ENCODE measurements at regions of chr2 and their contacts with region 1.

Region 1: DNA sequence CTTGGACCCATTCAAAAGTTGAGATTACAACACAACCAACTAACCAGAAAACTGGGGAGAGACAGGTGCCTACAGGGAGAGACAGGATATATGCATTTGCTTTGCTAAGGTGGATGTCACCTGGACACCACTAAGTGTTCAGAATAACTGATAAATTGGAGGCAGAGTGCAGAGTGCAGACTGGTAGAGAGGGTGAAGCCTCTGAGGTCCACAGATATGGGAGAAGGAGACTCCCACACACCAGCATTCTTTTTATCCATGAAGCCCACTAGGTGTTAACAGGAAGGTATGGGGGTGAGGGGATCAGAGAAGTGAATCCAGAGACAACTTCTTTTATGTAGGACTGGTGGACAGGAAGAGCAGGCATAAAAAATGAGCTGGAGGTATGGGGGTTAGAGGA is 1310.0 kb upstream of the ZEB2 start:
- DNase-seq: no peak
- H3K4me3 ChIP-seq: no peak overlapping the region
- H3K4me3 Mint-ChIP-seq: no peak overlapping the region
- H3K27ac ChIP-seq: no peak overlapping the region
- H3K27ac Mint-ChIP-seq: peak overlapping the region in 2 of 7 donors; percentile 4 to 5
- H3K4me1 ChIP-seq: no peaks in the 10 kb centered on the region
- H3K4me1 Mint-ChIP-seq: no peaks in the 10 kb centered on the region
- H3K27me3 ChIP-seq: no peaks in the 10 kb centered on the region
- H3K27me3 Mint-ChIP-seq: peaks cover 0 to 2% (median 1%) of the 10 kb centered on the region in 3 donors
- CTCF ChIP-seq: no peak

Region 2: GRCh38 chr2:145797692-145798091 is 32.2 kb before region 1 on chr2:
- intact Hi-C with region 1: loop called in 1 of 2 experiments (anchors 2 kb)
- DNase-seq: no peak
- H3K4me3 ChIP-seq: no peak overlapping the region
- H3K4me3 Mint-ChIP-seq: no peak overlapping the region
- H3K27ac ChIP-seq: no peak overlapping the region
- H3K27ac Mint-ChIP-seq: no peak overlapping the region
- H3K4me1 ChIP-seq: no peaks in the 10 kb centered on the region
- H3K4me1 Mint-ChIP-seq: no peaks in the 10 kb centered on the region
- H3K27me3 ChIP-seq: no peaks in the 10 kb centered on the region
- H3K27me3 Mint-ChIP-seq: peaks cover 0 to 1% (median 0%) of the 10 kb centered on the region in 3 donors
- CTCF ChIP-seq: no peak